Naive thymus-derived CD4-positive, alpha-beta T cell (primary cell): ENCODE measurements at regions of chr12 and their contacts with region 1.

Region 1: GRCh38 chr12:49110464-49111155 is at the start of gene LMBR1L:
- DNase-seq: peak; percentile 76 to 98 (median 96)
- ATAC-seq: peak; percentile 96
- H3K4me3 ChIP-seq: peak within 1 kb of the TSS; percentile 76
- H3K4me3 Mint-ChIP-seq: peak within 1 kb of the TSS; percentile 95 to 100 (median 98)
- H3K27ac ChIP-seq: peak within 1 kb of the TSS; percentile 95
- H3K27ac Mint-ChIP-seq: peak within 1 kb of the TSS; percentile 96 to 99 (median 99)
- H3K4me1 ChIP-seq: peaks cover 14 to 19% of the 10 kb centered on the region in 2 donors
- H3K4me1 Mint-ChIP-seq: peaks cover 14 to 48% (median 44%) of the 10 kb centered on the region in 7 donors
- H3K27me3 ChIP-seq: no peaks in the 10 kb centered on the region
- H3K27me3 Mint-ChIP-seq: no peaks in the 10 kb centered on the region
- total RNA-seq, gene LMBR1L: 67.4 to 328 (median 263) TPM

Region 2: DNA sequence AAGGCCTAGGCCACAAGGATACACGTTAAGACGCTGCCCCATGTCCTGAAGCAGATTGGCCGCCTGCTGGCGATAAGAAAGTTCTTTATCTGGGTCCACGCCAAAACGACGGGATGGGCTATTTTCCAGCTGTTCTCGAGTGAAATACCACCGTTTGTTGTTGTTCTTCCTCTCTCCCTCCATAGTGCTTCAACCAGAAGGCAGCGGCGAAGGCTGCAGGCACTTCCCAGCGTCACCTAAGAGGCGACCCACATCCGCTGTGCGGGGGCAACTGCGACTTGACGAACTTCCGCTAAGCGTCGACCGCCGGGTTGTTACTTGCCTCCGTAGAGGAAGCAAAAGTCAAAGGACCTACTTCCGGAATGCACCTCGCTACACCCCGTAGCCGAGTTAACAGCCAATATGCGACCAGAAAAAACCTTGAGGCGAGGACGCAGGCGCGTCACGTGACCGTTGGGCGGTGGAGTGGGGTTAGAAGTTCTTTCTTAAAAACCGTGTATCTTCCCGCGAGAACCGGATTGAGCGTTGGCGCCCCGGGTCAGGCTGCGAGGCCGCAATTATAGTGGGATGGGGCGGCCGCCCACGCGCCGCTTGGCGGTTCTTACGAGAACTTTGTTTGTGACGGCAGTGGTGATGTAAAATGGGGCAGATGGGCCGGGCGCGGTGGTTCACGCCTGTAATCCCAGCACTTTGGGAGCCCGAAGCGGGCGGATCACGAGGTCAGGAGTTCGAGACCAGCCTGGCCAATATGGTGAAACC is 393.9 kb before region 1 on chr12 and contains the start of gene CCNT1:
- CTCF ChIA-PET with region 1: no interaction called
- POLR2A ChIA-PET with region 1: no interaction called
- intact Hi-C with region 1: loop called in 1 of 2 experiments (anchors 5 kb)
- DNase-seq: peak; percentile 90 to 100 (median 99)
- ATAC-seq: peak; percentile 93
- H3K4me3 ChIP-seq: peak within 1 kb of the TSS; percentile 88
- H3K4me3 Mint-ChIP-seq: peak within 1 kb of the TSS; percentile 89 to 98 (median 94)
- H3K27ac ChIP-seq: peak within 1 kb of the TSS; percentile 95
- H3K27ac Mint-ChIP-seq: peak within 1 kb of the TSS; percentile 95 to 99 (median 98)
- H3K4me1 ChIP-seq: peaks cover 14 to 24% of the 10 kb centered on the region in 2 donors
- H3K4me1 Mint-ChIP-seq: peaks cover 21 to 50% (median 37%) of the 10 kb centered on the region in 7 donors
- H3K27me3 ChIP-seq: no peaks in the 10 kb centered on the region
- H3K27me3 Mint-ChIP-seq: peaks cover 0 to 4% (median 0%) of the 10 kb centered on the region in 5 donors
- total RNA-seq, gene CCNT1: 62.5 to 127 (median 76.6) TPM

Region 3: GRCh38 chr12:48779869-48780268 is 330.7 kb before region 1 on chr12:
- CTCF ChIA-PET with region 1: no interaction called
- POLR2A ChIA-PET with region 1: no interaction called
- intact Hi-C with region 1: no loop called
- DNase-seq: no peak
- ATAC-seq: no peak
- H3K4me3 ChIP-seq: no peak overlapping the region
- H3K4me3 Mint-ChIP-seq: no peak overlapping the region
- H3K27ac ChIP-seq: no peak overlapping the region
- H3K27ac Mint-ChIP-seq: no peak overlapping the region
- H3K4me1 ChIP-seq: no peaks in the 10 kb centered on the region
- H3K4me1 Mint-ChIP-seq: peaks cover 0 to 3% (median 0%) of the 10 kb centered on the region in 7 donors
- H3K27me3 ChIP-seq: no peaks in the 10 kb centered on the region
- H3K27me3 Mint-ChIP-seq: peaks cover 1 to 10% (median 4%) of the 10 kb centered on the region in 5 donors

Region 4: GRCh38 chr12:49060237-49061156 is 50.1 kb before region 1 on chr12 and contains the start of gene KMT2D:
- CTCF ChIA-PET with region 1: interaction called, 3 read pairs
- POLR2A ChIA-PET with region 1: interaction called, 4 read pairs
- intact Hi-C with region 1: loop called in 1 of 2 experiments (anchors 1 kb)
- DNase-seq: peak; percentile 80 to 94 (median 91)
- ATAC-seq: peak; percentile 86
- H3K4me3 ChIP-seq: peak within 1 kb of the TSS; percentile 87
- H3K4me3 Mint-ChIP-seq: peak within 1 kb of the TSS; percentile 91 to 98 (median 95)
- H3K27ac ChIP-seq: peak within 1 kb of the TSS; percentile 87
- H3K27ac Mint-ChIP-seq: peak within 1 kb of the TSS; percentile 90 to 99 (median 97)
- H3K4me1 ChIP-seq: peaks cover 38 to 40% of the 10 kb centered on the region in 2 donors
- H3K4me1 Mint-ChIP-seq: peaks cover 44 to 55% (median 51%) of the 10 kb centered on the region in 7 donors
- H3K27me3 ChIP-seq: no peaks in the 10 kb centered on the region
- H3K27me3 Mint-ChIP-seq: no peaks in the 10 kb centered on the region
- total RNA-seq, gene KMT2D: 129 to 167 (median 151) TPM

Region 5: GRCh38 chr12:49088190-49088931 is 22.2 kb before region 1 on chr12:
- CTCF ChIA-PET with region 1: interaction called, 9 read pairs
- POLR2A ChIA-PET with region 1: interaction called, 15 read pairs
- intact Hi-C with region 1: loop called (anchors 1 to 2 kb)
- DNase-seq: peak; percentile 39 to 73 (median 70)
- ATAC-seq: peak; percentile 94
- H3K4me3 ChIP-seq: no peak overlapping the region
- H3K4me3 Mint-ChIP-seq: peak overlapping the region in 7 of 10 donors; percentile 11 to 59 (median 48)
- H3K27ac ChIP-seq: no peak overlapping the region
- H3K27ac Mint-ChIP-seq: peak overlapping the region in 2 of 9 donors; percentile 5 to 34
- H3K4me1 ChIP-seq: peaks cover 35 to 40% of the 10 kb centered on the region in 2 donors
- H3K4me1 Mint-ChIP-seq: peaks cover 22 to 53% (median 38%) of the 10 kb centered on the region in 7 donors
- H3K27me3 ChIP-seq: peaks cover 14 to 37% of the 10 kb centered on the region in 2 donors
- H3K27me3 Mint-ChIP-seq: peaks cover 32 to 58% (median 49%) of the 10 kb centered on the region in 5 donors

Region 6: DNA sequence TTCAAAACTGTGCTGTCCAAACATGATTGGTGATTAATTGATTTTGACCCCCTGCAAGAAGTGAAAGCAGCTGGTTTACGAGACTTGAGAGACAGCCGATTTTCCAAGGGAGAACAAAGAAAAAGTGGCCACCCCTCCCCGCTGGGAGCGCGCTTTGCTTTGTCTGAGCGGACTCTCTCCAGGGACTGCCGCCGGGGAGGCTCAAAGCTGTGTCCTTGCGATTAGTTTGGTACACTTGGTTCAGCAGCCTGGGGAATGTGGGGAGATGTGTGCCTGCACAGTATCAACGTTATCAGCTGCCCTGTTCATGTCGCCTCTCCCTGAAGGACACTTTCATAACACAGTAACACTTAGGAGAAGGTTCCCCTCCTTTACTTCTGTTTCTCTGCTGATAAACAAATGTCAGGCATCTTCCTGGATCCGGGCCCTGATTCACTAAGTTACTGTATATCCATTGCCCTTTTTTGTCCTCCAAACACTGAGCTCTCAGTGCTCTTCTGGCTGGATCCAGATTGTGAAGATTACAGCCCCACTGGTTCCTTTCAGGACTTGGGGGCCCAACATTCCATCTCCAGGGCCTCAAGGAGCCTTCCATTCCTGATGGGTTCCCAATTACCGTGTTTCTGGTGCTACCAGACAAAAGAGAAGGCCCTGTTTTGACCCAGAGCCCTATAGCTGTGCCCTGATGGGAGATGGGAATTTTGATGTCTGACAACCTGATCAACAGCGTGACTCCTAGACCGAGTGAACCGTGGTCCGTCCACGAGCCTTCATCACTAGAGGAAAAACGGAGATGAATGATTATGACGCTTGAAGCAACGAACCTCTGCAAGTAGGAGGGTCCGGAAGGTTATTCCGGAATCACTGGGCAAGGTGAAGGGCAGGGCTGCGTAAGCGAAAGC is 122.6 kb after region 1 on chr12:
- CTCF ChIA-PET with region 1: interaction called, 16 read pairs
- POLR2A ChIA-PET with region 1: interaction called, 3 read pairs
- intact Hi-C with region 1: loop called in 1 of 2 experiments (anchors 1 kb)
- DNase-seq: peak in 1 of 9 donors; percentile 7
- ATAC-seq: no peak
- H3K4me3 ChIP-seq: no peak overlapping the region
- H3K4me3 Mint-ChIP-seq: peak overlapping the region; percentile 68 to 89 (median 85)
- H3K27ac ChIP-seq: no peak overlapping the region
- H3K27ac Mint-ChIP-seq: peak overlapping the region; percentile 65 to 93 (median 89)
- H3K4me1 ChIP-seq: peaks cover 0 to 7% of the 10 kb centered on the region in 2 donors
- H3K4me1 Mint-ChIP-seq: peaks cover 0 to 12% (median 9%) of the 10 kb centered on the region in 7 donors
- H3K27me3 ChIP-seq: no peaks in the 10 kb centered on the region
- H3K27me3 Mint-ChIP-seq: peaks cover 0 to 7% (median 0%) of the 10 kb centered on the region in 5 donors